ENCODE measurements at regions of chr16 and their contacts with region 1.

Region 1: DNA sequence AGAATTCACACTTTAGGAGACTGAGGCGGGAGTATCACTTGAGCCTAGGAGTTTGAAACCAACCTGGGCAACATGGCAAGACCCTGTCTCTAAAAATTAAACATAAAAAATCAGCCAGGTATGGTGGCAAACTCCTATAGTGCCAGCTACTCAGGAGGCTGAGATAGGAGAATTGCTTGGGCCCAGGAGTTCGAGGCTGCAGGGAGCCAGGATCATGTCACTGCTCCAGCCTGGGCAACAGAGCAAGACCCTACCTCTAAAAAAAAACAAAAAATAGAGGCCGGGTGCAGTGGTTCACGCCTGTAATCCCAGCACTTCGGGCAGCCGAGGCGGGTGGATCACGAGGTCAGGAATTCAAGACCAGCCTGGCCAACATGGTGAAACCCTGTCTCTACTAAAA is 8.9 kb upstream of the GPT2 start:
- DNase-seq: no peak
- H3K4me3 ChIP-seq: no peak overlapping the region
- H3K27ac ChIP-seq: no peak overlapping the region
- H3K4me1 ChIP-seq: peaks cover 5% of the 10 kb centered on the region
- H3K27me3 ChIP-seq: no peaks in the 10 kb centered on the region
- CTCF ChIP-seq: no peak
- EP300 ChIP-seq: no peak
- POLR2A ChIP-seq: no peak

Region 2: GRCh38 chr16:46743238-46743719 is 132.0 kb before region 1 on chr16:
- intact Hi-C with region 1: no loop called
- DNase-seq: no peak
- H3K4me3 ChIP-seq: no peak overlapping the region
- H3K27ac ChIP-seq: no peak overlapping the region
- H3K4me1 ChIP-seq: no peaks in the 10 kb centered on the region
- H3K27me3 ChIP-seq: no peaks in the 10 kb centered on the region
- CTCF ChIP-seq: no peak
- EP300 ChIP-seq: no peak
- POLR2A ChIP-seq: no peak

Region 3: DNA sequence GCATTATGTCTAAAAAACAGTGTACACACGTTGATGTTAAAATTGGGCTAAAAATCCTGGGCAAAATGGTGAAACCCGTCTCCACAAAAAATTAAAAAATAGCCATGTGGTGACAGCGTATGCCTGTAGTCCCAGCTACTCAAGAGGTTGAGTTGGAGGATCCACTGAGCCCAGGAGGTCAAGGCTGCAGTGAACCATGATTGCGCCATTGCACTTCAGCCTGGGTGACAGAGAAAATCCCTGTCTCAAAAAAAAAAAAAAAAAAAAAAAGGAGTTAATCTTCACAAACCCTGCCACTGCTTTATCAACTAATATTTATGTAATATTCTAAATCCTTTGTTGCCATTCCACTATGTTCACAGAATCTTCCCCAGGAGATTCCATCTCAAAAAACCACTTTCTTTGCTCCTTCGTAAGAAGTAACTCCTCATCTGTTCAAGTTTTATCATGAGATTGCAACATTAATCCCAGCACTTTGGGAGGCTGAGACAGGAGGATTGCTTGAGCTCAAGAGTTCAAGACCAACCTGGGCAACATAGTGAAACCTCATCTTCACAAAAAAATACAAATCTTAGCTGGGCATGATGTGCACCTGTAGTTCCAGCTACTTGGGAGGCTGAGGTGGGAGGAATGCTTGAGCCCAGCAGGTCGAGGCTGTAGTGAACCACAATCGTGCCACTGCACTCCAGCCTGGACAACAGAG is 42.3 kb before region 1 on chr16:
- intact Hi-C with region 1: loop called in 1 of 4 experiments (anchors 1 kb)
- DNase-seq: no peak
- H3K4me3 ChIP-seq: no peak overlapping the region
- H3K27ac ChIP-seq: no peak overlapping the region
- H3K4me1 ChIP-seq: no peaks in the 10 kb centered on the region
- H3K27me3 ChIP-seq: no peaks in the 10 kb centered on the region
- CTCF ChIP-seq: no peak
- EP300 ChIP-seq: no peak
- POLR2A ChIP-seq: no peak

Region 4: GRCh38 chr16:46908540-46909372 is 33.5 kb after region 1 on chr16:
- intact Hi-C with region 1: no loop called
- DNase-seq: peak; percentile 41 to 66 (median 56)
- H3K4me3 ChIP-seq: no peak overlapping the region
- H3K27ac ChIP-seq: no peak overlapping the region
- H3K4me1 ChIP-seq: no peaks in the 10 kb centered on the region
- H3K27me3 ChIP-seq: no peaks in the 10 kb centered on the region
- CTCF ChIP-seq: peak; percentile 43 to 60 (median 55)
- EP300 ChIP-seq: no peak
- POLR2A ChIP-seq: no peak